ENCODE measurements at regions of chr20 and their contacts with region 1.

Region 1: GRCh38 chr20:5056801-5057599 is 55.7 kb upstream of the SLC23A2 start:
- DNase-seq: peak; percentile 30 to 87 (median 64)
- ATAC-seq: peak; percentile 88 to 97 (median 96)
- H3K4me3 ChIP-seq: peak overlapping the region in 1 of 2 donors; percentile 15
- H3K4me3 Mint-ChIP-seq: peak overlapping the region in 2 of 3 donors; percentile 4 to 32
- H3K27ac ChIP-seq: peak overlapping the region; percentile 49
- H3K27ac Mint-ChIP-seq: peak overlapping the region; percentile 83 to 90
- H3K4me1 ChIP-seq: peaks cover 15 to 24% of the 10 kb centered on the region in 2 experiments
- H3K4me1 Mint-ChIP-seq: peaks cover 21 to 24% (median 22%) of the 10 kb centered on the region in 3 donors
- H3K27me3 ChIP-seq: no peaks in the 10 kb centered on the region
- H3K27me3 Mint-ChIP-seq: no peaks in the 10 kb centered on the region

Region 2: DNA sequence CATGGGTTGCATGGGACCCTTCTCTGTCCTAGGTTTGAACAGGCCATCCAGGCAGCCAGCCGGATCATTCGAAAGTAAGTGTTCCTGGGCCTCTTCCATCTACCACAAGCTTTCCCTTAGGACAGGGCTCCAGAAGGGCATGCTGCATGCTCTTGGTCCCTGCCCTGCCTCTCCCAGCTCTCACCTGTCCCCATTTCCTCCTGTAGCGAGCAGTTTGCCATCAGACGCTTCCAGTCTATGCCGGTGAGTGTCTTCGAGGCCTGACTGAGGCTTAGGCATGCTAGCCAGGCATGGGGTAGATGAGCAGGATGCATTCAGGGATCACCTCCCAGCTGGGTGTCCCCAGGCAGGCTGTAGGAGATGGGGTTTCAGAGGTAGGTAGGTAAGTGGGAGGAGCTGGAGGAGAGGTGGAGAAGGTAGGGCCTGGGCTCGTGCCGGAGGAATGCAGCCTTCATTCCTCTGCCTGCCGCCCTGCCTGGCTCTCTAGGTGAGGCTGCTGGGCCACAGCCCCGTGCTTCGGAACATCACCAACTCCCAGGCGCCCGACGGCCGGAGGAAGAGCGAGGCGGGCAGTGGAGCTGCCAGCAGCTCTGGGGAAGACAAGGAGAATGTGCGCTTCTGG is 1256.6 kb before region 1 on chr20:
- CTCF ChIA-PET with region 1: no interaction called
- POLR2A ChIA-PET with region 1: interaction called in 1 of 2 experiments, 10 read pairs
- DNase-seq: no peak
- ATAC-seq: no peak
- H3K4me3 ChIP-seq: no peak overlapping the region
- H3K4me3 Mint-ChIP-seq: peak overlapping the region; percentile 99 to 100 (median 100)
- H3K27ac ChIP-seq: peak overlapping the region; percentile 78
- H3K27ac Mint-ChIP-seq: peak overlapping the region; percentile 99 to 100
- H3K4me1 ChIP-seq: peaks cover 31 to 93% of the 10 kb centered on the region in 2 experiments
- H3K4me1 Mint-ChIP-seq: peaks cover 68 to 81% (median 74%) of the 10 kb centered on the region in 3 donors
- H3K27me3 ChIP-seq: no peaks in the 10 kb centered on the region
- H3K27me3 Mint-ChIP-seq: no peaks in the 10 kb centered on the region

Region 3: GRCh38 chr20:4666001-4666479 is 391.0 kb before region 1 on chr20:
- CTCF ChIA-PET with region 1: no interaction called
- POLR2A ChIA-PET with region 1: no interaction called
- DNase-seq: peak in 32 of 35 experiments; percentile 10 to 64 (median 30)
- ATAC-seq: peak; percentile 87 to 95 (median 91)
- H3K4me3 ChIP-seq: peak overlapping the region in 1 of 2 donors; percentile 11
- H3K4me3 Mint-ChIP-seq: peak overlapping the region; percentile 49 to 61 (median 56)
- H3K27ac ChIP-seq: peak overlapping the region; percentile 79
- H3K27ac Mint-ChIP-seq: peak overlapping the region; percentile 92 to 94
- H3K4me1 ChIP-seq: peaks cover 0 to 20% of the 10 kb centered on the region in 2 experiments
- H3K4me1 Mint-ChIP-seq: peaks cover 18 to 36% (median 36%) of the 10 kb centered on the region in 3 donors
- H3K27me3 ChIP-seq: peaks cover 0 to 3% of the 10 kb centered on the region in 2 experiments
- H3K27me3 Mint-ChIP-seq: peaks cover 0 to 6% of the 10 kb centered on the region in 2 donors

Region 4: GRCh38 chr20:5044165-5044564 is 12.8 kb before region 1 on chr20:
- CTCF ChIA-PET with region 1: interaction called, 3 to 10 read pairs
- POLR2A ChIA-PET with region 1: interaction called in 1 of 2 experiments, 3 read pairs
- DNase-seq: no peak
- ATAC-seq: no peak
- H3K4me3 ChIP-seq: no peak overlapping the region
- H3K4me3 Mint-ChIP-seq: no peak overlapping the region
- H3K27ac ChIP-seq: no peak overlapping the region
- H3K27ac Mint-ChIP-seq: no peak overlapping the region
- H3K4me1 ChIP-seq: peaks cover 0 to 10% of the 10 kb centered on the region in 2 experiments
- H3K4me1 Mint-ChIP-seq: peaks cover 4 to 7% (median 6%) of the 10 kb centered on the region in 3 donors
- H3K27me3 ChIP-seq: peaks cover 0 to 12% of the 10 kb centered on the region in 2 experiments
- H3K27me3 Mint-ChIP-seq: peaks cover 0 to 4% of the 10 kb centered on the region in 2 donors

Region 5: DNA sequence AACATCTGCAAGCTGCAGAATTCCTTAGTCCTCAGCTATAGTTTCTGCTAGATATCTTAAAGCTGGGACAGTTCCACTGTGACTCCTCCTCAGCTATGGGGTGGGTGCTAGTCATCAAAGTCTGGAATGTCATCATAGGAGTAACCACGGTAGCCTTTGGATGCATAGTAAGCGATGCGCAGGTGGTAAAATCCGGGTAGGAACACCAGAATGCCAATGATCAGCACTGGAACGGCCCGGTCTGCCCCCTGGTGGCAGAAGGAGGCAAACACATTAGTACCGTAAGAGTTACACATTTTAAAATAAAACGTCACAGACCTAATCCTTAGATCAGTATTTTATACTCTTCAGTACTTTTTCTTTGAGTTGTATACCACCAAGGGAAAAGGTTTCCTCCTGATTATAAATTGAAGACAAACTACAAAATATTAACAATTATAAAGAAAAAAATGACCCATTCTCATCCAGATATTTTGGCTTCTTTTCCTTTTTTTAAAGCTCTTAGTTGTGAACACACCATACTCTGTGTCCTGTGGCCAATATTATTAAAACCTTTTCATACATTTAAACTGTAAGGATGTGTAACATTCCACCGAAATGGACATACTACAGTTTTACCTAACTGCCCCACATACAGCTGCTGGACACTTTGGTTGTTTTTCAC is 43.8 kb after region 1 on chr20:
- CTCF ChIA-PET with region 1: interaction called, 8 to 54 read pairs
- POLR2A ChIA-PET with region 1: no interaction called
- DNase-seq: peak; percentile 27 to 85 (median 69)
- ATAC-seq: peak; percentile 75 to 89 (median 79)
- H3K4me3 ChIP-seq: no peak overlapping the region
- H3K4me3 Mint-ChIP-seq: no peak overlapping the region
- H3K27ac ChIP-seq: peak overlapping the region; percentile 45
- H3K27ac Mint-ChIP-seq: peak overlapping the region in 1 of 2 donors; percentile 61
- H3K4me1 ChIP-seq: peaks cover 0 to 3% of the 10 kb centered on the region in 2 experiments
- H3K4me1 Mint-ChIP-seq: peaks cover 9 to 18% (median 13%) of the 10 kb centered on the region in 3 donors
- H3K27me3 ChIP-seq: no peaks in the 10 kb centered on the region
- H3K27me3 Mint-ChIP-seq: no peaks in the 10 kb centered on the region

Region 6: DNA sequence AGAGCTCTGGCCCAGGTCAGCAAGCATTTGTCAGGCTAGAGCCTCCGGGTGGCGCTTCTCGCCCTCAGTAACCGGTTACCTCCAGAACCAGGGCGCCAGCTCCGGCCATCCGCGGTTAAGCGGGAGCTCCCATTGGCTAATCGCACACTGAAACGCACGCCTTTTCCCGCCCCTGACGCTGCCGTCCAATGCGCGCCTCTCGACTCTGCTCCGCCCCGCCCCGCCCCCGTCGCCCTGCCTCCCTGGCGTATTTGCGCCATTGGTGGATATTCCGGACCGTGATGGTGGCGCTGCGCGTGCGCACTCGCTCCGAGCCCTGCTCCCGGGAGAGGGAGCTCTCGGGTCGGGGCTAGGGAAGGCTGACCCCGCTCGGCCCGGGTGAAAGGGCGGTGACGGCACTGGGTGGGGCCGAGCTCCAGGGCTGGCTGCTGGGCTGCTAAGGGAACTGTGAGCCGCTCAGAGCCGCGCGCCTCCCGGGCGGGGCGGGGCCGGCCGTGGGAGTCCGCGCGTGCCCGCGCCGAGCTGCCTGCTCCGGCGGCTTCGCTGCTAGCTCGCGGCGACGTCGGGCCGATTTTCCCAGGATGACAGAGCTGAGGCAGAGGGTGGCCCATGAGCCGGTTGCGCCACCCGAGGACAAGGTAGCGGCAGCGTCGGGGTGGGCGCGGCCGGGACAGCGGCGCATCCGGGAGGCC is 69.7 kb after region 1 on chr20 and contains the start of gene CDS2:
- CTCF ChIA-PET with region 1: interaction called in 1 of 2 experiments, 11 read pairs
- POLR2A ChIA-PET with region 1: no interaction called
- DNase-seq: peak; percentile 98 to 100 (median 100)
- ATAC-seq: peak; percentile 87 to 89 (median 87)
- H3K4me3 ChIP-seq: peak within 1 kb of the TSS; percentile 77 to 86
- H3K4me3 Mint-ChIP-seq: peak within 1 kb of the TSS; percentile 90 to 94 (median 93)
- H3K27ac ChIP-seq: peak within 1 kb of the TSS; percentile 99
- H3K27ac Mint-ChIP-seq: peak within 1 kb of the TSS; percentile 95
- H3K4me1 ChIP-seq: peaks cover 18 to 28% of the 10 kb centered on the region in 2 experiments
- H3K4me1 Mint-ChIP-seq: peaks cover 34 to 36% (median 35%) of the 10 kb centered on the region in 3 donors
- H3K27me3 ChIP-seq: no peaks in the 10 kb centered on the region
- H3K27me3 Mint-ChIP-seq: no peaks in the 10 kb centered on the region
- total RNA-seq, gene CDS2: 47.1 to 62.2 (median 48.9) TPM